CD14-positive monocyte (primary cell): ENCODE measurements at regions of chr17 and their contacts with region 1.

Region 1: DNA sequence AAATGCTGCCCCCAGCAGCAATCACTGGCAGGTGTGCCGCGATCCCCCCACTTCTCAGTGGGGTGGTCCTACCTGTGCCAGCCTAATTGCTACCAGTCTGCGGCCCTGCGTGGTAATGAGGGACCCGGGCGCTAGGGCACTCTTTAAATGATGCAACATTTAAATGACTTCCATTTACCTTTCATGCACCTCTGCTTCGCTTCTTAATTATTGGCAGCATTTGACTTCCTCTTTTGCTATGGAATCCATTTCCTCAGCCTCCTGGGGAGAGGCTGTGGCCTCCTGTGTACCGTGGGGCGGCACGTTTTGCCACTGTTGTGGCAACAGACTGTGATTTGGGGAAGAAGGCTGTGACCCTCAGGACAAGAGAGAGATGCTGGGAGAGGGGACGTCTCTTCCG is 86.1 kb downstream of the RPA1 start:
- DNase-seq: no peak
- H3K4me3 ChIP-seq: no peak overlapping the region
- H3K4me3 Mint-ChIP-seq: peak overlapping the region in 1 of 2 donors; percentile 64
- H3K27ac ChIP-seq: no peak overlapping the region
- H3K27ac Mint-ChIP-seq: no peak overlapping the region
- H3K4me1 ChIP-seq: no peaks in the 10 kb centered on the region
- H3K4me1 Mint-ChIP-seq: peaks cover 4% of the 10 kb centered on the region
- H3K27me3 ChIP-seq: peaks cover 0 to 4% of the 10 kb centered on the region in 2 donors
- H3K27me3 Mint-ChIP-seq: peaks cover 18 to 38% (median 30%) of the 10 kb centered on the region in 3 donors
- CTCF ChIP-seq: no peak

Region 2: DNA sequence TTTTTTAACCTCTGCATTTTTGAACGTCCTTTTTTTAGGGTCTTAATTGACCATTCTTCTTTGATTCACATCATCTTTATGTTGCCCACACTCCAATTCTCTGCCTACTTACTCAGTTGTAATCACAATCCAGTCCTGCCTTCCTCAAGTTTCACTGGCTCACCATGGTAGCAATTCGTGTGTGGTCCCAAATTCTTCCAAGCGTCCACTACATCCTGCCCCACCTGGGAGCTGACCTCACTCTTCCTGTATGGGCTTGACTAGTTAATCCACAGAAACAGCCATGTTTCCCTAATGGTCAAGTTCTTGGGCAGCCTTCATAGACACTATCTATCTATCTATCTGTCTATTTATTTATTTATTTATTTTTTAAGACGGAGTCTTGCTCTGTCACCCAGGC is 212.8 kb before region 1 on chr17:
- intact Hi-C with region 1: no loop called
- DNase-seq: no peak
- H3K4me3 ChIP-seq: no peak overlapping the region
- H3K4me3 Mint-ChIP-seq: no peak overlapping the region
- H3K27ac ChIP-seq: no peak overlapping the region
- H3K27ac Mint-ChIP-seq: peak overlapping the region in 1 of 7 donors; percentile 4
- H3K4me1 ChIP-seq: no peaks in the 10 kb centered on the region
- H3K4me1 Mint-ChIP-seq: no peaks in the 10 kb centered on the region
- H3K27me3 ChIP-seq: peaks cover 0 to 10% of the 10 kb centered on the region in 2 donors
- H3K27me3 Mint-ChIP-seq: peaks cover 14 to 31% (median 18%) of the 10 kb centered on the region in 3 donors
- CTCF ChIP-seq: no peak

Region 3: GRCh38 chr17:1896243-1897104 is 19.4 kb before region 1 on chr17:
- intact Hi-C with region 1: no loop called
- DNase-seq: no peak
- H3K4me3 ChIP-seq: no peak overlapping the region
- H3K4me3 Mint-ChIP-seq: no peak overlapping the region
- H3K27ac ChIP-seq: no peak overlapping the region
- H3K27ac Mint-ChIP-seq: peak overlapping the region in 1 of 7 donors; percentile 45
- H3K4me1 ChIP-seq: no peaks in the 10 kb centered on the region
- H3K4me1 Mint-ChIP-seq: no peaks in the 10 kb centered on the region
- H3K27me3 ChIP-seq: no peaks in the 10 kb centered on the region
- H3K27me3 Mint-ChIP-seq: no peaks in the 10 kb centered on the region
- CTCF ChIP-seq: no peak

Region 4: GRCh38 chr17:1967213-1967612 is 51.3 kb after region 1 on chr17:
- intact Hi-C with region 1: no loop called
- DNase-seq: no peak
- H3K4me3 ChIP-seq: no peak overlapping the region
- H3K4me3 Mint-ChIP-seq: no peak overlapping the region
- H3K27ac ChIP-seq: no peak overlapping the region
- H3K27ac Mint-ChIP-seq: no peak overlapping the region
- H3K4me1 ChIP-seq: no peaks in the 10 kb centered on the region
- H3K4me1 Mint-ChIP-seq: peaks cover under 1% of the 10 kb centered on the region
- H3K27me3 ChIP-seq: no peaks in the 10 kb centered on the region
- H3K27me3 Mint-ChIP-seq: peaks cover 3 to 26% (median 6%) of the 10 kb centered on the region in 3 donors
- CTCF ChIP-seq: no peak

Region 5: GRCh38 chr17:2749784-2750181 is 833.9 kb after region 1 on chr17:
- intact Hi-C with region 1: loop called in 1 of 2 experiments (anchors 10 kb)
- DNase-seq: peak; percentile 49 to 57 (median 51)
- H3K4me3 ChIP-seq: no peak overlapping the region
- H3K4me3 Mint-ChIP-seq: no peak overlapping the region
- H3K27ac ChIP-seq: no peak overlapping the region
- H3K27ac Mint-ChIP-seq: no peak overlapping the region
- H3K4me1 ChIP-seq: no peaks in the 10 kb centered on the region
- H3K4me1 Mint-ChIP-seq: no peaks in the 10 kb centered on the region
- H3K27me3 ChIP-seq: peaks cover 14 to 49% of the 10 kb centered on the region in 2 donors
- H3K27me3 Mint-ChIP-seq: peaks cover 64 to 78% (median 71%) of the 10 kb centered on the region in 3 donors
- CTCF ChIP-seq: no peak